Transverse colon (tissue), 4 donors: ENCODE measurements at regions of chr18 and their contacts with region 1.

Region 1: GRCh38 chr18:74896390-74896991 is 298.8 kb downstream of the ZNF407 start:
- DNase-seq: peak; percentile 55
- H3K4me3 ChIP-seq: no peak overlapping the region
- H3K27ac ChIP-seq: no peak overlapping the region
- H3K4me1 ChIP-seq: peaks cover 0 to 8% (median 0%) of the 10 kb centered on the region in 4 donors
- H3K27me3 ChIP-seq: no peaks in the 10 kb centered on the region
- CTCF ChIP-seq: peak; percentile 41 to 77 (median 63)
- EP300 ChIP-seq: no peak
- POLR2A ChIP-seq: no peak

Region 2: GRCh38 chr18:74291771-74292540 is 604.5 kb before region 1 on chr18 and contains the start of gene CYB5A:
- in situ Hi-C with region 1: no loop called
- intact Hi-C with region 1: loop called (anchors 5 kb)
- DNase-seq: peak; percentile 99
- H3K4me3 ChIP-seq: peak within 1 kb of the TSS; percentile 52 to 96 (median 66)
- H3K27ac ChIP-seq: peak within 1 kb of the TSS; percentile 81 to 91 (median 86)
- H3K4me1 ChIP-seq: peaks cover 0 to 31% (median 18%) of the 10 kb centered on the region in 4 donors
- H3K27me3 ChIP-seq: no peaks in the 10 kb centered on the region
- CTCF ChIP-seq: peak in 4 of 5 experiments; percentile 2 to 45 (median 18)
- EP300 ChIP-seq: no peak
- POLR2A ChIP-seq: peak; percentile 71
- total RNA-seq, gene CYB5A: 34.0 to 236 (median 173) TPM

Region 3: DNA sequence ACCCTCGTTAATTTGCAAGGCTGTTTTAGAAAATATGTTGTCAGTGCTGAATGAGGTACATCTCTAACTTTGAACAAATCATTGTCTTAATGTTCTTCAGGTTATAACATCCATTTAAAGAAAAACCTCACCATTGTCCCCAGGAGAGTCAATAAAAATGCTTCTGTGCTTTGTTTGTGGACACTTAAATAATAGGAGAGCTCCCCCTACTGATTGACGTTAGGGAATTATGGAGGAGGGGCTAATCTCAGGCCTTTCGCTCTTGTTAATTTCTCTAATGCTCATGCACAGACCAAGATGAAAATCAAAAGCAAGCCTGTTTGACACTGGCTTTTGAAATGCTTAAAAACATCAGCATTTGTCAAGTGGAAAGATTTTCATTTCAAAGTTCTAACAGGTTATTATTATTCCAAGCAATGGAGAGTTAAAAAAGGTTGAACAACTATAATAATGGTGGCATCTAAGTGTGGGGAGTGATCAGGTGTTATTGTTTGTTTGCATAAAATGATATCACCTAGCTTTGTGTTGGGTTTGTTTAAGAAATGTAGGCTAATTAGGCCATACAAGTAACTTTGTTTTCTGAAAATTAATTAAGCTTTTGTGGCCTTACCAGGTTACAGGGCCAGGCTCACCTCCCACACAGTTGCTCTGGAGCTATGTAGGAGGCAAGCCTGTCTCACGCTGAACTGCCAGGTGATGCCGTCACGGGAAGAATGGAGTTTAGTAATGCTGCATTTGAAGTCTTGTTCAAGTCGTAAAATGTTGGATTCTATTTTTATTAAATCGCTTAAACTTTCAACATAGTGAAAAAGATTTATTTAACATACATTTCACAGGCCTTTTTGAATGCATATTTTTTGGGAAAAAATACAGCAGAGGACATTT is 582.7 kb after region 1 on chr18:
- in situ Hi-C with region 1: loop called in 1 of 4 experiments (anchors 25 kb)
- intact Hi-C with region 1: no loop called
- DNase-seq: no peak
- H3K4me3 ChIP-seq: no peak overlapping the region
- H3K27ac ChIP-seq: no peak overlapping the region
- H3K4me1 ChIP-seq: peaks cover 0 to 6% (median 0%) of the 10 kb centered on the region in 4 donors
- H3K27me3 ChIP-seq: no peaks in the 10 kb centered on the region
- CTCF ChIP-seq: peak; percentile 50 to 59 (median 52)
- EP300 ChIP-seq: no peak
- POLR2A ChIP-seq: no peak